Heart left ventricle (tissue), 16 donors: ENCODE measurements at regions of chr2 and their contacts with region 1.

Region 1: DNA sequence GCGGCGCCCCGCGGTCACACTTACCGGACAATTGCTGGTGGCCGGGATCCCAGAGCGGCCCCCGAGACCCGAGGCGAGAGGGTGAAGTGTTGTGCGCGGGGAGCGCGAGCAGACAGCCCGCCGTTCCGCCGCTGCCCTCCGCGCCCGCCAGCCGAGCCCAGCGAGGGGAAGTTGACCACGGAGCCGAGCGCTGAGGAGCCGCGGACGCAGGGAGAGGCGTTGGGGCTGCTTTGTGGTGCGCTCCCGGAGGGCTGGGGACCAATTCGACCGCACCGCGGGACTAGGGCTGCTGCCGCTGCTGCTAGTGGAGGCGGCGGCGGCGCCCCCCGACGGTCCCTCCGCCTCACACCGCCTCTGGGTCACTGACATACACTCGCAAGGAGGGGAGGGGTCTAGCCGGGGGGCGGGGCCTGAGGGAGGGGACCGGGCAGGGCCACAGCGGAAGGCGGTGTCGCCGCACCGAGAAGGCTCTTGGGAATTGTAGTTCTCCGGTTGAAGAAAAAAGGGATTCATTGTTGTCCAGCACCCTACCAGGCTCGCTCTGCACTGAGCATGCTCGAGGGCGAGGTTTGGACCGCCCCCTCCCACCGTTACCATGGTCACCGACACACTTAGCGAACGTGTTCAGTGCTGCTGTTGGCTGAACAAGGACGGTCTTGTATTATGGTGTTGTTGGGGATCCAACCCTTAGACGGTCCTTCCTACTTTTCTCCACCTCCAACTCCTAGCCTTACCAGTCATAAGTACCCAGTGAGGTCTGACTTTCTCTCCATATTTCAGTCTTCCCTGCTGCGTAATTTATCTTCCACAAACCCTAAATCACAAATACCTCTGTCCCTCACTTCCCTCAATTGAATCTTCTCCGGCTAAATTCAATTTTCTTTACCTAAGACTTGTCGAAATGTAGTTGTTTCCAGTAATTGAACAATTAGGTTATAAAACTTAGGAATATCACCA is at the start of gene PELI1:
- DNase-seq: peak; percentile 95 to 97 (median 96)
- ATAC-seq: peak; percentile 99 to 100 (median 100)
- H3K4me3 ChIP-seq: peak within 1 kb of the TSS; percentile 81 to 99 (median 94)
- H3K27ac ChIP-seq: peak within 1 kb of the TSS; percentile 94 to 99 (median 98)
- H3K4me1 ChIP-seq: peaks cover 0 to 32% (median 10%) of the 10 kb centered on the region in 12 donors
- H3K27me3 ChIP-seq: no peaks in the 10 kb centered on the region
- CTCF ChIP-seq: peak in 7 of 12 donors; percentile 21 to 56 (median 39)
- POLR2A ChIP-seq: peak; percentile 91 to 99
- total RNA-seq, gene PELI1: 5.9 to 14.6 (median 7.3) TPM

Region 2: DNA sequence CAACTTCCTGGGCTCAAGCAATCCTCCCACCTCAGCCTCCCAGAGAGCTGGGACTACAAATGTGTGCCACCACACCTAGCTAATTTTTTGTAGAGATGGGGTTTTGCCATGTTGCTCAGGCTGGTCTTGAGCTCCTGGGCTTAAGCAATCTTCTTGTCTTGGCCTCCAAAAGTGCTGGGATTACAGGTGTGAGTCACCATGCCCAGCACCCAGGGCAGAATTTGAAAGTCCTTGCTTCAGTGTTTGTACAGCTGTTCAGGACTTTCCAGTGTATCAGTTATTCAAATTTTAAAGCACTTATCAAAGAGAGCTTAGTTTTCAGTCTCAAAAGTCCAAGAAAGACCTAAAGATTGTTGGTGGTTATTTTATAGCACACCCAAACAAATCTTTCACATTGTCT is 81.5 kb before region 1 on chr2:
- intact Hi-C with region 1: loop called in 2 of 10 experiments (anchors 2 to 5 kb)
- DNase-seq: no peak
- ATAC-seq: no peak
- H3K4me3 ChIP-seq: no peak overlapping the region
- H3K27ac ChIP-seq: no peak overlapping the region
- H3K4me1 ChIP-seq: peaks cover 0 to 28% (median 8%) of the 10 kb centered on the region in 12 donors
- H3K27me3 ChIP-seq: no peaks in the 10 kb centered on the region
- CTCF ChIP-seq: no peak
- POLR2A ChIP-seq: no peak

Region 3: DNA sequence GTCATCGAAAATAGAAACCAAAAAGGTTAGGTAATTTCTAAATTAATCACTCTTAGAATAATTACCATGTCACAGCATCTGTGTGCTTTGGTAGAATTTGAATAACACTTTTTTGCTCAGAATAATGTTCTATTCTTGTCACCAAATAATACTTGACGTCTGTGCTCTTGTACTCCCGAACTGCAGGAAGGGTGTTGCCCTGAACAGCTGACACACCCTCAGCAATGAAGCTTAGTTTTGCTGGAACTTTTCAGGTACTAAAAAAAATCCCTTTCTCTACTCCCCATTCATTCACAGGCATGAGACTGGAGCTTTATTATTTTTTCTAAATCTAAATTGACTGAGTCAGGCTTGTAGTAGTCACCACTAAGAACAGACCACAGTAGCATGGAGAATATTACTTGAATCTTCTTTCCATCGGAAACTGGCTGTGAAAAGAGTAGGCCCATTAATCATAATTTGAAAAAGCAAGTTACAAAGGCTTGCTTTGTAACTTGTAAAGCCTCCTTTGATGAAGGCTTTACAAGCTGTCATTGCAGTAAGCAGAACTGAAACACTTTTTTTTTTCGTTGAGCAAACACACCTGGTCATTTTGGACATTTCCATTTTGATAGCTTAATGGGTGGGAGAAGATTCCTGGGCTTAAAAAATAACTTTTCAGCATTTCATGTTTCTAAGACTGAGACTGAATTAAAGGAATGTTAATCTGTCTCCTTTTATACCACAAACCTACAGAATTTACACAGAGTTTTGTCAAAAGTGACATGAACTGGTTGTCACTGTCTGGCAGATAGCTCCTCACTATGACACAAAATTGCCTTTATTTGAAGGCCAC is 70.2 kb after region 1 on chr2:
- intact Hi-C with region 1: loop called in 2 of 10 experiments (anchors 5 to 10 kb)
- DNase-seq: peak in 3 of 5 donors; percentile 36 to 44 (median 38)
- ATAC-seq: peak; percentile 81 to 96 (median 87)
- H3K4me3 ChIP-seq: no peak overlapping the region
- H3K27ac ChIP-seq: peak overlapping the region; percentile 37 to 88 (median 78)
- H3K4me1 ChIP-seq: peaks cover 0 to 54% (median 15%) of the 10 kb centered on the region in 12 donors
- H3K27me3 ChIP-seq: no peaks in the 10 kb centered on the region
- CTCF ChIP-seq: no peak
- POLR2A ChIP-seq: peak in 1 of 2 donors; percentile 19

Region 4: DNA sequence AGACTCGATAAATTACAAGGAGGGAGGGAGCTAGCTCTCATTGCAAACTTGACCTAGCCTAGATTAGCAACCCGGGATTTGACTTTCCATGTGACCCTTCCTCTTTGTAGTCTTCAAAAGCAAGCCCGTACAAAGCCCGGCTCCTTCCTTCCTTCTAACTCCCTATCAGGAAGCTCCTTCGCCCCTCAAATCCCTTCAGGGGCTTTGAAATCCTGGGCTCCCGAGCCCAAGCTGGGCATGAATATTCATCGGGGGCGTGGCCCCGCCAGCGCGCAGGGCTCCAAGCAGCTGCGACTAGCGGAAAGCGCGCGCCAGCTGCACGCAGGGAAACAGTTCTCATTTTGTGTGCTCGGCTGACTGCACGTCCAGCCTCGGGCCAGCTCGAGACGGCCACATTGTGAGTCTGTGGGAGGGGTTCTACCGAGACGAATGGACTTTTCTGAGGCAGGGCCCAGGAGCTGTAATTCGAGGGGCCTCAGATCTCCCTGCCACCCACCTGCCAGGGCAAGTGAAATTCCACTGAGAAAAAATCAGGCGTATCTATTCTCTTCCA is 83.9 kb after region 1 on chr2:
- intact Hi-C with region 1: loop called in 6 of 10 experiments (anchors 5 to 10 kb)
- DNase-seq: peak; percentile 86 to 94 (median 87)
- ATAC-seq: peak; percentile 94 to 99 (median 98)
- H3K4me3 ChIP-seq: peak overlapping the region; percentile 14 to 62 (median 50)
- H3K27ac ChIP-seq: peak overlapping the region; percentile 21 to 88 (median 78)
- H3K4me1 ChIP-seq: peaks cover 0 to 27% (median 15%) of the 10 kb centered on the region in 12 donors
- H3K27me3 ChIP-seq: no peaks in the 10 kb centered on the region
- CTCF ChIP-seq: peak in 3 of 12 donors; percentile 10 to 16 (median 13)
- POLR2A ChIP-seq: peak in 1 of 2 donors; percentile 62